ENCODE measurements at regions of chr2 and their contacts with region 1.

Region 1: GRCh38 chr2:119823734-119824334 is 64.1 kb downstream of the PTPN4 start:
- DNase-seq: no peak

Region 2: GRCh38 chr2:119759451-119760236 is 64.2 kb before region 1 on chr2 and contains the start of gene PTPN4:
- intact Hi-C with region 1: loop called in 1 of 2 experiments (anchors 5 kb)
- DNase-seq: peak; percentile 98
- total RNA-seq, gene PTPN4: 23.8 to 25.4 TPM

Region 3: DNA sequence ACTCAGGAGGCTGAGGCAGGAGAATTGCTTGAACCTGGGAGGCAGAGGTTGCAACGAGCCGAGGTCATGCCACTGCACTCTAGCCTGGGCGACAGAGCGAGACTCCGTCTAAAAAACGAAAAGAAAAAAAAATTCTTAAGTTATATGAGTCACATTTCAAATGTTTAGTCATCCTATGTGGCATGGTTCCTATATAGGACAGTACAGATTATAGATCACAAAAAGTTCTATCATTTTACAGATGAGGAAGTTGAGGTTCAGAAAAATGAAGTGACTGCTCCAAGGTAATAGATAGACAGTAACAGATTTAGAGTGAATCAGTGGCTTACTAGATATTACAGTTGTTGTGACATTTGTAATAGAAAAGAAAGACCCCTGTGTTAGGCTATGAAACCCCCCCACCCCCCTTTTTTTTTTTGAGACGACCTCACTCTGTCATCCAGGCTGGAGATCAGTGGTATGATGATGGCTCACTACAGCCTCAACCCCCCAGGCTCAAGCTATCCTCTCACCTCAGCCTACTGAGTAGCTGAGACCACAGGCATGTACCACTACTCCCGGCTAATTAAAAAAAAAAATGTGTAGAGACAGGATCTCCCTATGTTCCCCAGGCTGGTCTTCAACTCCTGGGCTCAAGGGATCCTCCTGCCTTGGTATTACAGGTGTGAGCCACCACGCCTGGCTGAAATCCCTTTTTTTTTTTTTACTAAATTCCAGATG is 41.4 kb before region 1 on chr2:
- intact Hi-C with region 1: no loop called
- DNase-seq: no peak